ENCODE measurements at regions of chr4 and their contacts with region 1.

Region 1: DNA sequence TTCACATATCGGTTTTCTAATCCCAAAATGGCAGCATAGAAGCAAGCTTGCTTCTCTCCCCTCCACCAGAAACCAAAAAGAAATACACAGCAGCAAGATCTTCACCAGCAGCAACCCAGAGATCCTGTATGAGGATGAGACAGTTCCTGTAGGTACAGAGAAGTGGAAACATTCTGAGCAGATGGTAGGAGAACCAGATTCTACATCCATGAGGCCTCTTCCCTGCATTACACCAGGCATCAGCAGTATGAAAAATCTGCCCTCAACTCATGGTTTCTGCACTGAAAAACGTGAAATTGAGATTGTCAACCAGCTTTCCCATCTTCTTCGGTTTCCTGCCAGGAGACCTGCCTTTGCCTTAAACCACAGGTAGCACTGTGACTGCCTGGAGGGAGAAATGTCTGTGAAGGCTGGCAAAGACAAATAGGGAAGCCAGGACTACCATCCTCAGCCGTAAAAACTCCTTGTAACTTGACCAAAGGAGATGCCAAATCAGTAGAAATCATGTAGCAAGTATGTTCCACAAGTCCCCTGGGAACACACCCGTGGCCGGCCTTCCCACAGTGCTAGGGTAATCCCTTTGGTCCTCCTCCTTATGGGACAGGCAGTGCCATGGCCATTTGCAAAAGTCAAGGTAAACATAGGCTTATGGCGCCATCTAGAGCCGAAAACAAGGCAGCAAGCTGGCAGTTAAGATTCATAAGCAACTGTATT is 24.0 kb upstream of the MTHFD2L start:
- DNase-seq: peak; percentile 67 to 76 (median 73)
- ATAC-seq: peak; percentile 71 to 93 (median 92)
- H3K4me3 ChIP-seq: no peak overlapping the region
- H3K27ac ChIP-seq: no peak overlapping the region
- H3K4me1 ChIP-seq: peaks cover 0 to 4% (median 0%) of the 10 kb centered on the region in 12 donors
- H3K27me3 ChIP-seq: no peaks in the 10 kb centered on the region
- CTCF ChIP-seq: peak; percentile 73 to 93 (median 86)
- POLR2A ChIP-seq: no peak

Region 2: GRCh38 chr4:72701987-72702819 is 1431.7 kb before region 1 on chr4:
- intact Hi-C with region 1: loop called in 1 of 10 experiments (anchors 10 kb)
- DNase-seq: peak in 1 of 5 donors; percentile 10
- ATAC-seq: peak in 2 of 4 donors; percentile 36 to 52
- H3K4me3 ChIP-seq: peak overlapping the region in 10 of 12 donors; percentile 27 to 54 (median 47)
- H3K27ac ChIP-seq: no peak overlapping the region
- H3K4me1 ChIP-seq: no peaks in the 10 kb centered on the region
- H3K27me3 ChIP-seq: no peaks in the 10 kb centered on the region
- CTCF ChIP-seq: peak; percentile 32 to 79 (median 62)
- POLR2A ChIP-seq: no peak

Region 3: DNA sequence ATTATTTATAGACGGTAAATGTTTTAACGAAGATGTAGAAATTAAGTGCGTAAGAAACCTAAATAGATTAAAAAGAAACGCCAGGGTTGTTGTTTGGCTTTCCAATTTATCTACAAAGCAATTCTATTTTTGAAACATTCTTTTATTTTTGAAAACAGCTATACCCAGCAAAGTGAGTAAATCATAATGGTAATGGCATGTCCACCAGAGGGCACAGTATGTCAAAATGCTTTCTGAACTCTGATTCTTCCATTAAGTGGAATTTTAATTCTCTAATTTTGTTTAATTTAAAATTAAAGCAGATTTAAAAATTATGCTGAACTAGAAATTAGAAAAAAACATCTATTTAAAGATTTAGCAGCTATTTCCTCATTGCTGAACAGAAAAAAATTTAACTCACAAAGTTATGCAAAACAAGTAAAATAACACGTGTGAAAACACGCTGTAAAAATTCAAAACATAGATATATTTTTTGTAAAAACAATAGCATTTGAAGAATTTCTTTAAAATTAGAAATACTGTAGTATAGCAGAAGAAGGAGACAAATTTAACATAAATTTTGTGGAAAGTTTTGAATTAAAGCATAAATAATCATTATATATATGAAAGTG is 540.2 kb before region 1 on chr4:
- intact Hi-C with region 1: loop called in 7 of 10 experiments (anchors 5 to 10 kb)
- DNase-seq: no peak
- ATAC-seq: no peak
- H3K4me3 ChIP-seq: no peak overlapping the region
- H3K27ac ChIP-seq: no peak overlapping the region
- H3K4me1 ChIP-seq: no peaks in the 10 kb centered on the region
- H3K27me3 ChIP-seq: no peaks in the 10 kb centered on the region
- CTCF ChIP-seq: peak in 11 of 12 donors; percentile 7 to 60 (median 45)
- POLR2A ChIP-seq: no peak

Region 4: DNA sequence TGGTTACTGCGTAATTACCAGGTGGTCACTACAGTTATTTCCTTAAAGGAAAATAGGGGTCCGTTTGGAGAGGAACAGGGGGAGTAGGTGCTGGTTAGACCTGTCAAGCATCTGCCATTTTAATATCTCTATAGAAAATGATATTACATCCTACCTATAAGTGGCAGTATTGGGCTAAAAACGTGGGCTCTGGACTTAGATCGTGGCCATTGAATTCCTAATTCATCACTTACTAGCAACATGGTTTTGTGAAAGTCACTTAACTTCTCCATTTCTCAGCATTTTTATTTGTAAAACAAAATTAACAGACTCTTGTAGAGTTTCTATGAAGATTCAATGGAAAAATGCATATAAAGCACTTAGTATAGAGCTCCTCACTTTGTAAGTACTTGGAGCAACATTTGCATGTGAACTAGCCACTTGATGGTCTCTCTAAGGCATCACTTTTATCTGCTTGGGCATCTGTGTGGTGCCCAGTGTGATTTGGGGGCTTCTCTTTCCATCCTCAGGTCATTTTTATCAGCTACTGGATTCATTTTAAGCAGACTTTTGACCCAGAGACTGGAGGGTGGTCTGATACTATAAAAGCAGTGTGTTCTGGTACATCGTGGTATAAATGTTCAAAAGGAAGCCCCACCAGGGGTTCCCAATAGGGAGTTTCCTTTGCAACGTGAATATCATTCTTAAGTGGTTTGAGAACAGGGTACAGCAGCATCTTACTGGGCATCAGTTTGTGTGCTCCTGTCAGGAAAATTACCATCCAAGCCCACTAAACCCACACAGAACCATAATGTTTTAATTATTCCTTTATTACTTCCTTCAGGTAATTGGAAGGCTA is 471.0 kb before region 1 on chr4:
- intact Hi-C with region 1: loop called in 9 of 10 experiments (anchors 1 to 5 kb)
- DNase-seq: no peak
- ATAC-seq: peak in 3 of 4 donors; percentile 51 to 76 (median 61)
- H3K4me3 ChIP-seq: no peak overlapping the region
- H3K27ac ChIP-seq: no peak overlapping the region
- H3K4me1 ChIP-seq: no peaks in the 10 kb centered on the region
- H3K27me3 ChIP-seq: no peaks in the 10 kb centered on the region
- CTCF ChIP-seq: peak; percentile 23 to 63 (median 46)
- POLR2A ChIP-seq: no peak

Region 5: GRCh38 chr4:73729534-73730165 is 404.3 kb before region 1 on chr4:
- intact Hi-C with region 1: loop called (anchors 1 to 10 kb)
- DNase-seq: peak in 4 of 5 donors; percentile 46 to 70 (median 62)
- ATAC-seq: peak; percentile 80 to 93 (median 88)
- H3K4me3 ChIP-seq: no peak overlapping the region
- H3K27ac ChIP-seq: peak overlapping the region in 1 of 12 donors; percentile 6
- H3K4me1 ChIP-seq: peaks cover 0 to 67% (median 17%) of the 10 kb centered on the region in 12 donors
- H3K27me3 ChIP-seq: no peaks in the 10 kb centered on the region
- CTCF ChIP-seq: peak; percentile 71 to 90 (median 81)
- POLR2A ChIP-seq: no peak

Region 6: DNA sequence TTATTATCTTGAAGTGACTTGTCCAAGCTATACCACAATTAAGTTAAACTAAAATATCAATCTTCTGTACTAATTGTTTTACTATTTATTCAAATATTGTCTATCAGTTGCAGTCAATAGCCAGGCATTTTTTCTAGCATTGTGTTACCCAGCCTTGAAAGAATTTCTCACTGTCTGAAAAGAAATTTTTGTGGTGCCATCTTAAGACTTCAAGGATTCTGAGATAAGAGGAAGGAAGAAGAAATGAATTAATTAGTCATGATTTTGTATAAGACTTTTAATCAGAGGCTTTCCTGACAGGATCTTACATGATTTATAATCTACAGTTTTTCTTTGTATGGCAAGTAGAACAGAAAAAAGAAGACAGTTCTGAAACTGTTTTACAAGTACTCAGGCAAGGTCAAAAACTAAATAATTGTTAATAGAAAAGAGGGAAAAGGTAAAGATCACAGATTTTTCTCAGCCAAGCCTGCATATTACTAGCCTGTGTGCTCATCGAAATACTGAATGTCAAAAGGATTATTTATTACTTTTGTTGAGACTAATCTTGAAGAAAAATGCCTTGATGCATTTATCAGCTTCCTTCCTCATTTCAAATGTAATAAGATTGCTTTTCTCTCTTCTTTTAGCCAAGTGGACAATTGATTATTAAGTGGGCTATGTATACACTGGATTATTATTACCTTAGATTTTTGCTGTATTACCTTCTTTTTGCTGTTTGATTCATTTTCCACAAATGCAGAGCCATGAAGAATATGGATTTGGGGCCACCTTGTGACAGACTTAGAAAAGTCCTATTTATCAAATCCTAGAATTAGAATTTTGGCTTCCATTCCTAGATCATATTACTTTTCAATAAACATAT is 210.9 kb before region 1 on chr4:
- intact Hi-C with region 1: loop called in 5 of 10 experiments (anchors 5 to 10 kb)
- DNase-seq: no peak
- ATAC-seq: no peak
- H3K4me3 ChIP-seq: no peak overlapping the region
- H3K27ac ChIP-seq: no peak overlapping the region
- H3K4me1 ChIP-seq: peaks cover 0 to 6% (median 0%) of the 10 kb centered on the region in 12 donors
- H3K27me3 ChIP-seq: peaks cover 0 to 7% (median 0%) of the 10 kb centered on the region in 9 donors
- CTCF ChIP-seq: peak in 9 of 12 donors; percentile 19 to 54 (median 45)
- POLR2A ChIP-seq: no peak

Region 7: GRCh38 chr4:74038161-74039064 is 95.5 kb before region 1 on chr4 and contains the start of gene CXCL3:
- intact Hi-C with region 1: loop called in 2 of 10 experiments (anchors 2 to 10 kb)
- DNase-seq: peak; percentile 68 to 89 (median 80)
- ATAC-seq: peak; percentile 85 to 97 (median 94)
- H3K4me3 ChIP-seq: peak within 1 kb of the TSS; percentile 37 to 83 (median 70)
- H3K27ac ChIP-seq: peak within 1 kb of the TSS; percentile 25 to 87 (median 77)
- H3K4me1 ChIP-seq: peaks cover 0 to 13% (median 3%) of the 10 kb centered on the region in 12 donors
- H3K27me3 ChIP-seq: peaks cover 0 to 9% (median 0%) of the 10 kb centered on the region in 9 donors
- CTCF ChIP-seq: peak in 10 of 12 donors; percentile 14 to 56 (median 44)
- POLR2A ChIP-seq: peak in 1 of 2 donors; percentile 22
- total RNA-seq, gene CXCL3: 0.32 to 8.9 (median 0.97) TPM in 7 of 9 donors, not detected in the others

Region 8: GRCh38 chr4:74267998-74268606 is 134.2 kb after region 1 on chr4:
- intact Hi-C with region 1: no loop called
- DNase-seq: no peak
- ATAC-seq: no peak
- H3K4me3 ChIP-seq: no peak overlapping the region
- H3K27ac ChIP-seq: no peak overlapping the region
- H3K4me1 ChIP-seq: peaks cover 0 to 5% (median 0%) of the 10 kb centered on the region in 12 donors
- H3K27me3 ChIP-seq: no peaks in the 10 kb centered on the region
- CTCF ChIP-seq: no peak
- POLR2A ChIP-seq: no peak